Naive thymus-derived CD4-positive, alpha-beta T cell (primary cell): ENCODE measurements at regions of chr11 and their contacts with region 1.

Region 1: GRCh38 chr11:5684646-5685362 is at the start of gene TRIM5:
- DNase-seq: peak; percentile 37 to 86 (median 83)
- ATAC-seq: peak; percentile 90
- H3K4me3 ChIP-seq: peak within 1 kb of the TSS; percentile 90
- H3K4me3 Mint-ChIP-seq: peak within 1 kb of the TSS; percentile 81 to 99 (median 94)
- H3K27ac ChIP-seq: peak within 1 kb of the TSS; percentile 76
- H3K27ac Mint-ChIP-seq: peak within 1 kb of the TSS; percentile 90 to 98 (median 95)
- H3K4me1 ChIP-seq: peaks cover 9 to 23% of the 10 kb centered on the region in 2 donors
- H3K4me1 Mint-ChIP-seq: peaks cover 28 to 83% (median 66%) of the 10 kb centered on the region in 7 donors
- H3K27me3 ChIP-seq: no peaks in the 10 kb centered on the region
- H3K27me3 Mint-ChIP-seq: no peaks in the 10 kb centered on the region
- total RNA-seq, gene TRIM5: 16.9 to 36.8 (median 26.2) TPM

Region 2: DNA sequence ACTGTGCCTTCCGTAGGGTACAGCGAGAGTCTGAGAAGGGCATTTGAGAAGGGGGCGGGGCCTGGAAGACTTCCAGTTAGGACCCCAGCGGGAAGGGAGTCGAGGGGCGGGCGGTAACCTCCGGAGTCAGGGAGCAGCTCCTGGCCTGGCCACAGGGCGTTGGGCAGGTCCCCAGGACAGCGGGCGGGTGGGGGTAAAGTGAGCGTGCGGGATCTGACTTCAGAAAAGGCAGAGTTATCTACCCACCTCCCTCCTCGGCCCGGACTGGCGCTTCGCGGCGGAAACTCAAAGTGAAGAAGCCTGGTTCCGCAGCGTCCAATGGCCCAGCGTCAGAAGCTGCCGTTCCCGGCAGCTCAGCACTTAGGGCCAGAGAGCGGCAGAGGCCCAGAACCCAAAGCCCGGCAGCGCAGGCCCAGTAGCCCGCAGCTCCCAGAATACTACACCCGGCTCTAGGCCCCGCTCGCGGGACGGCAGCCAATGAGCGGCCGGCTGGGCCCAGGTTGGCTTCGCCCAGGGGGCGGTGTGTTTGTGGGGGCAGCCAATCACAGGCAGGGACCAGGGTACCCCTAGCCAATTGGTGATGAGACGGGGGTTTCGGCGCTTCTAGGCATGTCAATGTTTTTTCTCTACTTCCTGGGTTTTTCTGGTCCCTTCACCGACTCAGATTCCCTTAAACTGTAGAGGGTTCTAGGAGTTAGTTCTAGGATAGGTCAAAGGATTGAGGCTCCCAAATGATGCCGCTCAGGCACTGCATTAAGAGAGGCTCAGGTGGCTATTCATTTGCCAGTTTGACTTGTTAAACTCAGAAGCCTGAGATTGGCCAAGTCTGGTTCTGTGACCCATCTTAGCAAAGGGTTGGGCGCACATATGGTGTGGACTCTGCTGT is 1076.8 kb before region 1 on chr11 and contains the start of gene TRIM68:
- CTCF ChIA-PET with region 1: no interaction called
- POLR2A ChIA-PET with region 1: no interaction called
- intact Hi-C with region 1: loop called in 1 of 2 experiments (anchors 2 kb)
- DNase-seq: peak; percentile 87 to 96 (median 94)
- ATAC-seq: peak; percentile 100
- H3K4me3 ChIP-seq: peak within 1 kb of the TSS; percentile 80
- H3K4me3 Mint-ChIP-seq: peak within 1 kb of the TSS; percentile 80 to 97 (median 91)
- H3K27ac ChIP-seq: peak within 1 kb of the TSS; percentile 88
- H3K27ac Mint-ChIP-seq: peak within 1 kb of the TSS; percentile 85 to 96 (median 94)
- H3K4me1 ChIP-seq: peaks cover 15 to 22% of the 10 kb centered on the region in 2 donors
- H3K4me1 Mint-ChIP-seq: peaks cover 29 to 68% (median 56%) of the 10 kb centered on the region in 7 donors
- H3K27me3 ChIP-seq: no peaks in the 10 kb centered on the region
- H3K27me3 Mint-ChIP-seq: peaks cover 0 to 2% (median 0%) of the 10 kb centered on the region in 5 donors
- total RNA-seq, gene TRIM68: 3.8 to 29.5 (median 12.4) TPM

Region 3: GRCh38 chr11:5304046-5304445 is 380.8 kb before region 1 on chr11:
- CTCF ChIA-PET with region 1: no interaction called
- POLR2A ChIA-PET with region 1: no interaction called
- intact Hi-C with region 1: no loop called
- DNase-seq: no peak
- ATAC-seq: no peak
- H3K4me3 ChIP-seq: no peak overlapping the region
- H3K4me3 Mint-ChIP-seq: no peak overlapping the region
- H3K27ac ChIP-seq: no peak overlapping the region
- H3K27ac Mint-ChIP-seq: no peak overlapping the region
- H3K4me1 ChIP-seq: no peaks in the 10 kb centered on the region
- H3K4me1 Mint-ChIP-seq: peaks cover 0 to 2% (median 0%) of the 10 kb centered on the region in 7 donors
- H3K27me3 ChIP-seq: no peaks in the 10 kb centered on the region
- H3K27me3 Mint-ChIP-seq: peaks cover 0 to 19% (median 6%) of the 10 kb centered on the region in 5 donors

Region 4: GRCh38 chr11:5600374-5600851 is 84.4 kb before region 1 on chr11:
- CTCF ChIA-PET with region 1: interaction called, 5 read pairs
- POLR2A ChIA-PET with region 1: no interaction called
- intact Hi-C with region 1: loop called (anchors 1 to 5 kb)
- DNase-seq: peak; percentile 17 to 61 (median 49)
- ATAC-seq: peak; percentile 91
- H3K4me3 ChIP-seq: no peak overlapping the region
- H3K4me3 Mint-ChIP-seq: no peak overlapping the region
- H3K27ac ChIP-seq: no peak overlapping the region
- H3K27ac Mint-ChIP-seq: no peak overlapping the region
- H3K4me1 ChIP-seq: no peaks in the 10 kb centered on the region
- H3K4me1 Mint-ChIP-seq: peaks cover 4 to 15% (median 9%) of the 10 kb centered on the region in 7 donors
- H3K27me3 ChIP-seq: no peaks in the 10 kb centered on the region
- H3K27me3 Mint-ChIP-seq: peaks cover 0 to 20% (median 17%) of the 10 kb centered on the region in 5 donors

Region 5: DNA sequence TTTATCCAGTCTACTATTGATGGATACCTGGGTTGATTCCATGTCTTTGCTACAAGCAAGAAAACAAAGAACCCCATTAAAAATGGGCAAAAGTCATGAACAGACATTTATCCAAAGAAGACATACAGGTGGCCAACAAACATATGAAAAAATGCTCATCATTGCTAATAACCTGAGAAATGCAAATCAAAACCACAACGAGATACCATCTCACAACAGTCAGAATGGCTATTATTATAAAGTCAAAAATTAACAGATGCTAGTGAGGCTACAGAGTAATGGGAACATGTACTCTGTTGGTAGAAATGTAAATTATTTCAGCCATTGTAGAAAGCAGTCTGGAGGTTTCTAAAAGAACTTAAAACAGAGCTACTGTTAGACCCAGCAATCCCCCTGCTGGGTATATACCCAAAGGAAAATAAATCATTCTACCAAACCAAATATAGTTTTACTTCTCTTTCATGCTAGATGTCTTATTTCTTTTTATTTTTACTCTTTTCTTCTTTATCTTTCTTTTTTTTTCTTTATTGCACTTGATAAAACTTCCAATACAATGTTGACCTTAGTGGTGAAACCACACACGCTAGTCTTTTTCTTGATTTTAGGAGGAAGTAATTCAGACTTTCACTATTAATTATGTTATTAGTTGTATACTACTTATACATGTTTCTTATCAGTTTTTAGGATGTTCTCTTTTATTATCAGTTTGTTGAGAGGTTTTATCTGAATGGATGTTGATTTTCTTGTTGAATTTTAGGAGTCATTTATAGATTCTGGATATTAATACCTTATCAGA is 19.1 kb after region 1 on chr11:
- CTCF ChIA-PET with region 1: interaction called, 14 read pairs
- POLR2A ChIA-PET with region 1: interaction called, 18 read pairs
- intact Hi-C with region 1: loop called (anchors 1 to 2 kb)
- DNase-seq: no peak
- ATAC-seq: no peak
- H3K4me3 ChIP-seq: no peak overlapping the region
- H3K4me3 Mint-ChIP-seq: peak overlapping the region in 1 of 10 donors; percentile 42
- H3K27ac ChIP-seq: no peak overlapping the region
- H3K27ac Mint-ChIP-seq: peak overlapping the region in 7 of 9 donors; percentile 9 to 82 (median 61)
- H3K4me1 ChIP-seq: peaks cover 5 to 22% of the 10 kb centered on the region in 2 donors
- H3K4me1 Mint-ChIP-seq: peaks cover 11 to 53% (median 41%) of the 10 kb centered on the region in 7 donors
- H3K27me3 ChIP-seq: no peaks in the 10 kb centered on the region
- H3K27me3 Mint-ChIP-seq: no peaks in the 10 kb centered on the region

Region 6: GRCh38 chr11:5737091-5737490 is 52.3 kb after region 1 on chr11:
- CTCF ChIA-PET with region 1: no interaction called
- POLR2A ChIA-PET with region 1: no interaction called
- intact Hi-C with region 1: no loop called
- DNase-seq: no peak
- ATAC-seq: no peak
- H3K4me3 ChIP-seq: no peak overlapping the region
- H3K4me3 Mint-ChIP-seq: no peak overlapping the region
- H3K27ac ChIP-seq: no peak overlapping the region
- H3K27ac Mint-ChIP-seq: no peak overlapping the region
- H3K4me1 ChIP-seq: no peaks in the 10 kb centered on the region
- H3K4me1 Mint-ChIP-seq: no peaks in the 10 kb centered on the region
- H3K27me3 ChIP-seq: no peaks in the 10 kb centered on the region
- H3K27me3 Mint-ChIP-seq: peaks cover 0 to 12% (median 4%) of the 10 kb centered on the region in 5 donors

Region 7: DNA sequence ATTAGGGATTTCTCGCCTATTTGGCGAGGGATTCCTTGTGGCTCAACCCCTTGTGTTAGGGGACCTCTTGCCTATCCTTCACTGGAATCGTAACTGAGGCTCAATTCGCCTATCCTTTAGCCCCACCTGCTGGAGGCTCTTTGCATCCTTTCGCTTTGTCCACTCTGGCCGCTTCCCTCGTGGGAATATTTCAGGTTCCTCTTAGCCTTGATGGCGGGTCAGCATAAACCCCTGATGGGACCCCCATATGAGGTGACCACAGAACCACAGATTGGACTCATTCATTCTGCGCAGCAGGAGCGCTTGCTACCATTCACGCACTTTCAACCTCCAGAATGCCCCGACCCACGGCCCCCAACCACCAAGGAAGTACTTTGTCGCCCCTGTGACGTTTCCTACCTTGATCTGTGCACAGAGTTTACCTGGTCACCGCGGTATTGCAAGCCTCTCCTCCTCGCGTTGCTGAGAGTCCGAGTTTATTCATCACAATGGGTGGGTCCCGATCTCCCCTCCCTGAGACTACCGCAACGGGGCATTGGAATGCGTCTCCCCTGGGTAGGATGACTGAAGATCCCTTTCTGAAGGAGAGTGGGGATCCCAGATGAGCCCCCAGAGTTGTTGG is 123.8 kb after region 1 on chr11 and contains the start of gene OR52N2:
- CTCF ChIA-PET with region 1: interaction called, 5 read pairs
- POLR2A ChIA-PET with region 1: no interaction called
- intact Hi-C with region 1: loop called (anchors 1 kb)
- DNase-seq: peak; percentile 38 to 73 (median 66)
- ATAC-seq: peak; percentile 92
- H3K4me3 ChIP-seq: peak within 1 kb of the TSS; percentile 61
- H3K4me3 Mint-ChIP-seq: peak within 1 kb of the TSS; percentile 86 to 95 (median 90)
- H3K27ac ChIP-seq: no peak within 1 kb of the TSS
- H3K27ac Mint-ChIP-seq: peak within 1 kb of the TSS in 8 of 9 donors; percentile 1 to 87 (median 20)
- H3K4me1 ChIP-seq: no peaks in the 10 kb centered on the region
- H3K4me1 Mint-ChIP-seq: peaks cover 7 to 16% (median 10%) of the 10 kb centered on the region in 7 donors
- H3K27me3 ChIP-seq: peaks cover 0 to 6% of the 10 kb centered on the region in 2 donors
- H3K27me3 Mint-ChIP-seq: peaks cover 12 to 29% (median 25%) of the 10 kb centered on the region in 5 donors
- total RNA-seq, gene OR52N2: not detected

Region 8: DNA sequence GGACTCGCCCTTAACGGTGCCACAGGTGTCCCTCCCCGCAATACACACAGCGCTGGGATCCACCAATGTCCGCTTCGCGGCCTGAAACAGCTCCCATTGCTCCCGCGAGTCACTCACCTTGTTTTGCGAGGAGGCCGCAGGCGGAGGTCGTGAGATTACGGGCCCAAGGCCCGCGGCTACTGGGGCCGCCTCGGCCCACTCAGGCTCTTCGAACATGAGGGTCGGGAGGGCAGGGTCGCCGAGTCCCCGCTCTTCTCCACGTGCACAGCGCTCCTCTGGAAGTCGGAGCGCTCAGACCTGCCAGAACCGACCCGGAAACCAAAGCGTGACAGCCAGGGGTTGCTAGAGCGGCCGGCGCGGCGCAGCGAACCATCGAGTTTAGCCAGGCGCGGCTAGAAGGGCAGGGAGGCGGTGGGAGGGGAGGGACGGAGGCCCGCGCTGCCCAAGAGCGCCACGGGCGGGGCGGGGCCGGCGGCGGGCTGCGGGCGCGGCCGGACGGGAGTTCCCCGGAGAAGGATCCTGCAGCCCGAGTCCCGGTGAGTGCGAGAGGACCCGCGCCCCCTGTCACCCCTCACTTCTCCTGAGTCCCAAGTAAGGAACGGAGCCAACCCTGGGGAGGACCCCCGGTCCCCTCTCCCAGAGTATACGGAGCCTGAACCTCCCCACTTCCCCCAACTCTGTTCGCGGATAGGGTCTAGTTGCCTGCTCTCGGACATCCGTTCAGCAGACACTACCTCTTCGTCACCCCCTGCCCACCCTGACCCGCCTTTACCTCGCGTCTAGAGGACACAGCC is 918.7 kb after region 1 on chr11 and contains the starts of genes ILK and RRP8:
- CTCF ChIA-PET with region 1: no interaction called
- POLR2A ChIA-PET with region 1: no interaction called
- intact Hi-C with region 1: loop called in 1 of 2 experiments (anchors 10 kb)
- DNase-seq: peak; percentile 69 to 86 (median 78)
- ATAC-seq: peak; percentile 92
- H3K4me3 ChIP-seq: peak within 1 kb of the TSS; percentile 85
- H3K4me3 Mint-ChIP-seq: no peak within 1 kb of the TSS
- H3K27ac ChIP-seq: peak within 1 kb of the TSS; percentile 86
- H3K27ac Mint-ChIP-seq: no peak within 1 kb of the TSS
- H3K4me1 ChIP-seq: peaks cover 51% of the 10 kb centered on the region in 2 donors
- H3K4me1 Mint-ChIP-seq: peaks cover 9 to 33% (median 21%) of the 10 kb centered on the region in 7 donors
- H3K27me3 ChIP-seq: no peaks in the 10 kb centered on the region
- H3K27me3 Mint-ChIP-seq: no peaks in the 10 kb centered on the region
- total RNA-seq, gene ILK: 34.4 to 165 (median 89.6) TPM
- total RNA-seq, gene RRP8: 21.4 to 37.9 (median 27.9) TPM